ENCODE measurements at regions of chr16 and their contacts with region 1.

Region 1: GRCh38 chr16:78972006-78972405 is 628.5 kb downstream of the MAF start:
- DNase-seq: no peak
- ATAC-seq: no peak
- H3K4me3 ChIP-seq: no peak overlapping the region
- H3K4me3 Mint-ChIP-seq: no peak overlapping the region
- H3K27ac ChIP-seq: no peak overlapping the region
- H3K27ac Mint-ChIP-seq: no peak overlapping the region
- H3K4me1 ChIP-seq: no peaks in the 10 kb centered on the region
- H3K4me1 Mint-ChIP-seq: no peaks in the 10 kb centered on the region
- H3K27me3 ChIP-seq: no peaks in the 10 kb centered on the region
- H3K27me3 Mint-ChIP-seq: no peaks in the 10 kb centered on the region

Region 2: GRCh38 chr16:79100447-79100846 is 128.4 kb after region 1 on chr16:
- CTCF ChIA-PET with region 1: no interaction called
- POLR2A ChIA-PET with region 1: interaction called in 1 of 2 experiments, 10 read pairs
- DNase-seq: no peak
- ATAC-seq: no peak
- H3K4me3 ChIP-seq: no peak overlapping the region
- H3K4me3 Mint-ChIP-seq: no peak overlapping the region
- H3K27ac ChIP-seq: no peak overlapping the region
- H3K27ac Mint-ChIP-seq: no peak overlapping the region
- H3K4me1 ChIP-seq: no peaks in the 10 kb centered on the region
- H3K4me1 Mint-ChIP-seq: peaks cover 2 to 20% (median 12%) of the 10 kb centered on the region in 3 donors
- H3K27me3 ChIP-seq: no peaks in the 10 kb centered on the region
- H3K27me3 Mint-ChIP-seq: no peaks in the 10 kb centered on the region

Measured in T-cell (primary cell).